ENCODE measurements at regions of chr6 and their contacts with region 1.

Region 1: DNA sequence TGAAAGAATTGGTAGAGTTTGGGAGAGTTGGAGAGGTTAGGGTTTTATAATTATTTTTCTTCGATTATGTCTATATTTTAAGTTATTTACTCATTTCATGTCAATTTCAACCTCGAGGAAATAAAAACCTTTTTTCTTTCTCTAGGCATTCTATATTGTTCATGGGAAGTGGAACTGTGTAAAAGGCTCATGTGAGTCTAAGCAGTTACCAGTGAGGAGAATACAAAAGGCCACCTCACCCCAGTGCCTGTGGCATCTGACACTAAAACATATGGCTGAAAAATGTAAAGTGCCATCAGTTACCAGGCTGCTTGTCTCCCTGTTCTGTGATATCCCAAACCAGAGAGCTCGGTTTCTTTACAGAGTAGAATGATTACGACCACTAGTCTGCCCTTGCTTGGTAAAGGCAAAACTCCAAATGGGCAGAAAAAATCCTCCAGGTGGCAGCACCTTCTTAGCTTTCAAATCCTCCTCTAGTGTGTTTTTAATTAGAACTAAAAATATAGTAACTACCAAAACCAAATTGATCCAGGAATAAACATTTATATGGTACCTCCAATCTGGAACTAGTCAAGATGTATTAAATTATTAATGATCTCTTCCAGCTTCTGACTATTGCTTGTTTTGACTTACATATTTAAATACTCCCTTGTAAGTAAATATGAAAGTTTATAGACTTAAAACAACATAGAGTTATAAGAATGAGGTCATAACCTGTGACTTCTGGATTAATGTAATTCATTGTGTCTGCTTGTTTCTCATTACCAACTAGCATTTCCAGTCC is 122.6 kb upstream of the MCHR2 start:
- DNase-seq: peak in 1 of 2 donors; percentile 79
- H3K4me3 ChIP-seq: no peak overlapping the region
- H3K27ac ChIP-seq: no peak overlapping the region
- H3K4me1 ChIP-seq: no peaks in the 10 kb centered on the region
- H3K27me3 ChIP-seq: peaks cover 0 to 8% (median 0%) of the 10 kb centered on the region in 3 donors
- CTCF ChIP-seq: peak in 5 of 7 experiments; percentile 19 to 59 (median 29)
- EP300 ChIP-seq: no peak
- POLR2A ChIP-seq: no peak

Region 2: DNA sequence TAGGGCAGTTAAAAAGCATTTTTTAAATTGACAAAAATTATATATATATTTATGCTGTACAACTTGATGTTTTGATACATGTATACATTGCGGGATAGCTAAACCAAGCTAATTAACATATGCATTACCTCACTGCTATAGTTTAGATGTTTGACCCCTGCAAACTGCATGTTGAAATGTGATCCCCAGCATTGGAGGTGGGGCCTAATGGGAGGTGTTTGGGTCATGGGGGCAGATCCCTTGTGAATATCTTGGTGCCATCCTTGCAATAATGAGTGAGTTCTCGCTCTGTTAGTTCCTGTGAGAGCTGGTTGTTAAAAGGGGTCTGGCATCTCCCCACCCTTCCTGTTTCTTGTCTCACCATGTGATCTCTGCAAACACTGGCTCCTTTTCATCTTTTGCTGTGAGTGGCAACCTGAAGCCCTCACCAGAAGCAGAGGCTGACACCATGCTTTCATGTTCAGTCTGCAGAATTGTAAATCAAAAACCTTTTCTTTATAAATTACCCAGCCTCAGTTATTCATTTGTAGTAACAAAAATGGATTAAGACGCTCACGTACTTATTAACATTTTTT is 234.4 kb before region 1 on chr6:
- intact Hi-C with region 1: no loop called
- DNase-seq: peak in 1 of 2 donors; percentile 2
- H3K4me3 ChIP-seq: no peak overlapping the region
- H3K27ac ChIP-seq: no peak overlapping the region
- H3K4me1 ChIP-seq: no peaks in the 10 kb centered on the region
- H3K27me3 ChIP-seq: no peaks in the 10 kb centered on the region
- CTCF ChIP-seq: no peak
- EP300 ChIP-seq: no peak
- POLR2A ChIP-seq: no peak

Region 3: GRCh38 chr6:99905209-99906106 is 211.1 kb before region 1 on chr6:
- intact Hi-C with region 1: no loop called
- DNase-seq: peak in 1 of 2 donors; percentile 60
- H3K4me3 ChIP-seq: no peak overlapping the region
- H3K27ac ChIP-seq: no peak overlapping the region
- H3K4me1 ChIP-seq: no peaks in the 10 kb centered on the region
- H3K27me3 ChIP-seq: peaks cover 0 to 5% (median 0%) of the 10 kb centered on the region in 3 donors
- CTCF ChIP-seq: peak in 2 of 7 experiments; percentile 37 to 40
- EP300 ChIP-seq: no peak
- POLR2A ChIP-seq: no peak

Region 4: GRCh38 chr6:100479179-100480035 is 362.8 kb after region 1 on chr6:
- intact Hi-C with region 1: loop called (anchors 10 kb)
- DNase-seq: peak in 1 of 2 donors; percentile 65
- H3K4me3 ChIP-seq: no peak overlapping the region
- H3K27ac ChIP-seq: no peak overlapping the region
- H3K4me1 ChIP-seq: peaks cover 0 to 8% (median 0%) of the 10 kb centered on the region in 4 donors
- H3K27me3 ChIP-seq: peaks cover 0 to 46% (median 4%) of the 10 kb centered on the region in 3 donors
- CTCF ChIP-seq: peak in 5 of 7 experiments; percentile 32 to 69 (median 60)
- EP300 ChIP-seq: no peak
- POLR2A ChIP-seq: no peak

Region 5: GRCh38 chr6:100664274-100665040 is 547.9 kb after region 1 on chr6:
- intact Hi-C with region 1: loop called (anchors 10 kb)
- DNase-seq: peak in 1 of 2 donors; percentile 52
- H3K4me3 ChIP-seq: no peak overlapping the region
- H3K27ac ChIP-seq: no peak overlapping the region
- H3K4me1 ChIP-seq: peaks cover 0 to 4% (median 0%) of the 10 kb centered on the region in 4 donors
- H3K27me3 ChIP-seq: no peaks in the 10 kb centered on the region
- CTCF ChIP-seq: peak in 5 of 7 experiments; percentile 16 to 66 (median 45)
- EP300 ChIP-seq: no peak
- POLR2A ChIP-seq: no peak